Activated CD8-positive, alpha-beta T cell treated with anti-CD3 and anti-CD28 coated beads, Interleukin-2, amount 10 ng/mL, durations not matched to agents 7 days and 5 days (primary cell): ENCODE measurements at regions of chr15 and their contacts with region 1.

Region 1: GRCh38 chr15:73972984-73973682 is 19.0 kb downstream of the STOML1 start:
- DNase-seq: peak; percentile 89
- ATAC-seq: peak; percentile 89
- H3K4me3 Mint-ChIP-seq: no peak overlapping the region
- H3K27ac Mint-ChIP-seq: no peak overlapping the region
- H3K4me1 Mint-ChIP-seq: peaks cover 45% of the 10 kb centered on the region
- H3K27me3 Mint-ChIP-seq: peaks cover 14% of the 10 kb centered on the region

Region 2: GRCh38 chr15:73991726-73992593 is 18.8 kb after region 1 on chr15 and contains the start of gene STOML1:
- CTCF ChIA-PET with region 1: interaction called, 87 read pairs
- POLR2A ChIA-PET with region 1: interaction called, 29 read pairs
- DNase-seq: peak; percentile 94
- ATAC-seq: peak; percentile 79
- H3K4me3 Mint-ChIP-seq: peak within 1 kb of the TSS; percentile 81
- H3K27ac Mint-ChIP-seq: peak within 1 kb of the TSS; percentile 72
- H3K4me1 Mint-ChIP-seq: peaks cover 52% of the 10 kb centered on the region
- H3K27me3 Mint-ChIP-seq: no peaks in the 10 kb centered on the region
- total RNA-seq, gene STOML1: 10.8 to 10.9 TPM

Region 3: DNA sequence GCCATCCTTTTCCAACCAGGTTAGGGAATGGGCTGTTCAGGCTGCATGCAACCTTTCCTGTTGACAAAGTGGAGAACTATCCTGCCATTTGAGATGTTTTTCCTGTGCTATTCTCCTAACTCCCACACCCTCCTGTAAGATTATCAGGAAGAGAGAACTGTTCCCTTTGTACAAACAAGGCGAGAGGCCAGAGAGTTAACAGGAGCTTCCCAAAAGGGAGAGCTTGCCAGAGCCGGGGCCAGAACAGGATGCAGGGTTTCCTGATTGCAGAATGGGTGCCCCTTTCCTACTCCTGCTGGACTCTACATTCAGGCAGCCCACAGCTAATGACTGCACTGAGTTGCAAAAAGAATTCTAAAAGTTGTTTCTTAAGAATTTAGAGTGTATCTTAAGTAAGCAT is 38.5 kb after region 1 on chr15:
- CTCF ChIA-PET with region 1: interaction called, 85 read pairs
- POLR2A ChIA-PET with region 1: no interaction called
- DNase-seq: no peak
- ATAC-seq: no peak
- H3K4me3 Mint-ChIP-seq: no peak overlapping the region
- H3K27ac Mint-ChIP-seq: peak overlapping the region; percentile 37
- H3K4me1 Mint-ChIP-seq: peaks cover 50% of the 10 kb centered on the region
- H3K27me3 Mint-ChIP-seq: no peaks in the 10 kb centered on the region

Region 4: GRCh38 chr15:74036271-74037170 is 63.4 kb after region 1 on chr15:
- CTCF ChIA-PET with region 1: interaction called, 177 read pairs
- POLR2A ChIA-PET with region 1: interaction called, 3 read pairs
- DNase-seq: no peak
- ATAC-seq: no peak
- H3K4me3 Mint-ChIP-seq: no peak overlapping the region
- H3K27ac Mint-ChIP-seq: peak overlapping the region; percentile 5
- H3K4me1 Mint-ChIP-seq: peaks cover 4% of the 10 kb centered on the region
- H3K27me3 Mint-ChIP-seq: no peaks in the 10 kb centered on the region

Region 5: GRCh38 chr15:74053941-74054529 is 80.9 kb after region 1 on chr15:
- CTCF ChIA-PET with region 1: interaction called, 177 read pairs
- POLR2A ChIA-PET with region 1: no interaction called
- DNase-seq: peak; percentile 84
- ATAC-seq: peak; percentile 98
- H3K4me3 Mint-ChIP-seq: no peak overlapping the region
- H3K27ac Mint-ChIP-seq: peak overlapping the region; percentile 20
- H3K4me1 Mint-ChIP-seq: peaks cover 12% of the 10 kb centered on the region
- H3K27me3 Mint-ChIP-seq: peaks cover 8% of the 10 kb centered on the region

Region 6: DNA sequence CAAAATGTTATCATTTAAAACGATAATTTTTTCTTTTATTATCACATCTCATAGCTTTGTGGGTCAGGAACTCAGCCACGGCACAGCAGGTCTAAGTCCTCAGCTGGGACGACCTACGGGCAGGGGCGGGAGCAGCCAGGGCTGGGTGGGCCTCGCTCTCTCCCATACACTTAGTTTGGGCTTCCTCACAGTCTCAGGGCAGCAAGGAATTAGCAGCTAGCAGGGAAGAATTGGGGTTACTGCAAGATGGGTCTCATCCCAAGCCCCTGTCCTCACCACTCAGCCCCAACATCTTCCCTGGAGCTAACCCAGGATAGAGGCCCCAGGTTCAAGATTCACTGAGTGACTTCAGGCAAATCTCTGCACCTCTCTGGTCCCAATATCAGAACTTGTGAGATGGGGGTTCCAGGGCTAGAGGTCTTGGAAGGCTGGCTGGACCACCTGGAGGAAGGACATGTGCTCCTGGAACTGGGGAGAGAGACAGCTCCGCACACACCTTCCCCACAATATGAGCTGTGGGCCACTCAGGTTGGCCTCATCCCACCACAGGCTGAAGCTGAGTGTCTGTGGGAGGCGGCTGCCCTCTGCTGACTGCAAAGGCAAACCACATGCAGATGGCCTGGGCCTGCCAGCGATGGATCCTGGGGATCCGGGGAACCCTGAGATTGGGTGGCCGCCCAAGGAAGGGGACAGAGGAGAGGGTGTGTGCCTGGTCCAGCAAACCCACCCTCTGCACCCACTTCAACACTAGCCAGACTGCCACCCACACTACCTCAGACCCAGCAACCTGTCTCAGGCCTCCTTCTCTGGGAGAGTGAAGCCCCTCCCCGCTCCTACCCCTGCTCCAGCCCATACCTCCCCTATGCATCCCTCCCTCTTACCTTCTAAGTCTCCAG is 349.3 kb after region 1 on chr15:
- CTCF ChIA-PET with region 1: interaction called, 11 read pairs
- POLR2A ChIA-PET with region 1: no interaction called
- DNase-seq: peak; percentile 78
- ATAC-seq: peak; percentile 83
- H3K4me3 Mint-ChIP-seq: no peak overlapping the region
- H3K27ac Mint-ChIP-seq: no peak overlapping the region
- H3K4me1 Mint-ChIP-seq: peaks cover 45% of the 10 kb centered on the region
- H3K27me3 Mint-ChIP-seq: no peaks in the 10 kb centered on the region